MCF 10A (cell line): ENCODE measurements at regions of chr4 and their contacts with region 1.

Region 1: DNA sequence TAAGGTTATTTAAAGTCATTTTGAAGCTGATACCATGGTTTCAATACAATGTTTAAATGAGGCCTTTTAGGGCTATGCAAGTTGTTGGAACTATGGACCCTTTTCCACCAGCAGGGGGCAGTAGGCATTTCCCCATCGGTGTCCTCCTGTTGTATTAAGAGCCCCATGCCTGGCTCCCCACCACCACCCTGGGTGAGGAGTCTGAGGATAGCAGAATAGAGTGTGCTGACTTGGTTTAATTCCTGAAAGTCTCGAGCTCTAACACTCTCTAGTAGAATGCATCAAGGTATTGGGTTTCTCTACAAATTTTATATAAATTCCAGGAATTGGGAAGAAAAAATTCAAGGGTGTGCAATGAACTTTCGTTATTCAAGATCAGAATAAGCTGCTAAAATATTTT is 234.8 kb upstream of the JADE1 start:
- DNase-seq: peak; percentile 79
- H3K4me3 Mint-ChIP-seq: no peak overlapping the region
- H3K27ac Mint-ChIP-seq: no peak overlapping the region
- H3K4me1 Mint-ChIP-seq: peaks cover 32% of the 10 kb centered on the region
- H3K27me3 Mint-ChIP-seq: no peaks in the 10 kb centered on the region
- CTCF ChIP-seq: peak; percentile 61

Region 2: DNA sequence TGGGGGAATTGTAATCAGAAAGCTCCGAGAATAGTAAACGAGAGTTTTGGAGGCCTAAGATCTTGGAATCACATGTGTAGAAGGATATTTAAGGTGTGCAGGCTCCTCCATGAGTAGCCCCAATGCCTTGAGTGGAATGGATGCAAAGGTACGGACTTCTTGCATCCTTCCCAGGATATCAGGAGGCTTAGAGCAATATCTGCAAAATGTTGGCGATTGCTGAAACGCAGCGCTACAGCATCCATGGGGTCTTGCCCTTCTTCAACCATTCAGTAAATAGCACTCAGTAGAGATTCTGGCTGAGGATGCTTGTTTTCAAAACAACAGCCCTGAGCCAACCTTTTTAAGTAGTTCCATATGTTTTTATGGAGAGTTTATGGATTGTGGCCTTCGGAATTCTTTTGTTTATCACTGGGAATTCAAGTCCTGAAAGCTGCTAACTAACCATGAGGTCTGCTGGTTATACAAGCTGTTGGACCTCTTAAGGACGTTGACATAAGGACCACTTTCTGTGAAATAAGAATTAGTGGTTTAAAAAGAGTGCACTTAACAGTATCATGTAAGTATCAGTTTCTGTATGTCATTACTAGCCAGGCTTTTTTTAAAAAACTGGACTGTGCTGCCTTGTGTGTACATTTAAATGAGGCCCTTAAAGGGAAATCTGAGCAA is 58.3 kb before region 1 on chr4:
- CTCF ChIA-PET with region 1: no interaction called
- POLR2A ChIA-PET with region 1: no interaction called
- intact Hi-C with region 1: no loop called
- DNase-seq: no peak
- H3K4me3 Mint-ChIP-seq: no peak overlapping the region
- H3K27ac Mint-ChIP-seq: peak overlapping the region; percentile 90
- H3K4me1 Mint-ChIP-seq: peaks cover 42% of the 10 kb centered on the region
- H3K27me3 Mint-ChIP-seq: no peaks in the 10 kb centered on the region
- CTCF ChIP-seq: no peak

Region 3: DNA sequence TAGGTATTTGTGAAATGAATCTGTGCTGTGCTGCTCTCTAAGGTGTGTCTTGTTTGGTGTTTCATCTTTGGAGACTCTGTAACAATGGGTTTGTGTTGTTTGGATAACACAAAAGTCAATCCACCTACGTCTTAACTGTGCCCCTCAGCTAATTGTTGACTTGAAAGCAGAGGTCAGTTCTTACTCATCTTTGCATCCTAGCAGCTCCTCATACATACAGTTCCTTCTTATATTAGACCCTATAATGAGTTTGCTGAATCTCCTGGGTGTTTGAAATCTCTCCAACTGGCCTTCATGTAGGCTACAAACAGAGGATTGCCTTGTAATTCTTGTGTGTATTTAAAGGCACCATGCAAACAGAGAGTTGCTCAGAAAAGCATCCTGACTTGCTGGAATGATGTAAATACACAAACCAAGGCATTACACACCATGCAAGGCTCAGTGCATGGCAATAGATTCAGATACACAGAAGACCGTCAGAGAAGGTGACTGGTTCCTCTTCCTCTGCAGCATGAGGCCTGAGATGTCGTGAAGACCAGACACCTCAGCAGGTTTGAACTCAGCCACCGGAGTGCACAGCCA is 14.8 kb after region 1 on chr4:
- CTCF ChIA-PET with region 1: interaction called, 19 read pairs
- POLR2A ChIA-PET with region 1: interaction called, 4 read pairs
- intact Hi-C with region 1: no loop called
- DNase-seq: no peak
- H3K4me3 Mint-ChIP-seq: no peak overlapping the region
- H3K27ac Mint-ChIP-seq: no peak overlapping the region
- H3K4me1 Mint-ChIP-seq: no peaks in the 10 kb centered on the region
- H3K27me3 Mint-ChIP-seq: no peaks in the 10 kb centered on the region
- CTCF ChIP-seq: no peak

Region 4: DNA sequence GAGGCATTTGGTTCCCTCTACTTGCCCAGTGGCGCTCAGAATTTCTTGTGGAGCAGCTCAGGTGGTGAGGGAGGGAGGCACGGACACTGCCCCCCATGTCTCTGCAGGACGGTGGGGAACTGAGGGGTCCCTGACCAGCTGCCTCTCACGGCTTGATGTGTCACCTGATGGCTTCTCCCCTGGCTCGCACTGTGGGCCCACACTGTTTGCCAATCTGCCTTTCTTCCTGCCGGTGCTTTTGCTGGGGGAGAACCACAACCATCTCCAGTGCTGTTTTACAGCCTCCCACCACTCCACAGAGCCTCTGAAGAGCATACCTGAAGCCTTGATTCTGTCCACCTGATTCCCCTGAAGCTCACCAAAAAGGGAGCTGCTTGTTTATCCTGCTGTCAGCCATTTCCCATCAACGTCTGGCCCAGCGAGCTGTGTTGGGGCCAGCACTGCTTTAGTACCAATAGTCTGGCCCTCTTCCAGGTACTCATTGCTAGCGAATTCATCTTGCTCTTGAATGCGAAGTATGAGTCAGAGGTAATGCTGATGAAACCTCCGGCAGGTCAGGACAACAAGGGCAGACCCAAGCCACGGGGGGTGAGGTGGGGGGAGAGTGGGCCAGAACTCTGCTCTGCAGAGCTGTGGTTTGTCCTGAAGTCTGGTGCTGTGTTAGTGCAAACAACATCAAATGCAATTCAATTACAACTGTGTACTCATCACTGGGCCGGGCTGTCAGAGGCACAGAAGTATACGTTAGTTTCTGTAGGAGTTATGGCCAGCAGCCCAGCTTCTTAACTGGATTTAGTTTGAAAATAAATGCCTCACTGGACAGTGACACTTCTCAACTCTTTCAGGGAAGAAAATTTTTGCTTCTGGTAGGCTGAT is 26.5 kb after region 1 on chr4:
- CTCF ChIA-PET with region 1: interaction called, 50 read pairs
- POLR2A ChIA-PET with region 1: interaction called, 16 read pairs
- intact Hi-C with region 1: loop called (anchors 2 kb)
- DNase-seq: peak; percentile 99
- H3K4me3 Mint-ChIP-seq: peak overlapping the region; percentile 53
- H3K27ac Mint-ChIP-seq: peak overlapping the region; percentile 84
- H3K4me1 Mint-ChIP-seq: peaks cover 64% of the 10 kb centered on the region
- H3K27me3 Mint-ChIP-seq: no peaks in the 10 kb centered on the region
- CTCF ChIP-seq: no peak